ENCODE measurements at regions of chr13 and their contacts with region 1.

Region 1: DNA sequence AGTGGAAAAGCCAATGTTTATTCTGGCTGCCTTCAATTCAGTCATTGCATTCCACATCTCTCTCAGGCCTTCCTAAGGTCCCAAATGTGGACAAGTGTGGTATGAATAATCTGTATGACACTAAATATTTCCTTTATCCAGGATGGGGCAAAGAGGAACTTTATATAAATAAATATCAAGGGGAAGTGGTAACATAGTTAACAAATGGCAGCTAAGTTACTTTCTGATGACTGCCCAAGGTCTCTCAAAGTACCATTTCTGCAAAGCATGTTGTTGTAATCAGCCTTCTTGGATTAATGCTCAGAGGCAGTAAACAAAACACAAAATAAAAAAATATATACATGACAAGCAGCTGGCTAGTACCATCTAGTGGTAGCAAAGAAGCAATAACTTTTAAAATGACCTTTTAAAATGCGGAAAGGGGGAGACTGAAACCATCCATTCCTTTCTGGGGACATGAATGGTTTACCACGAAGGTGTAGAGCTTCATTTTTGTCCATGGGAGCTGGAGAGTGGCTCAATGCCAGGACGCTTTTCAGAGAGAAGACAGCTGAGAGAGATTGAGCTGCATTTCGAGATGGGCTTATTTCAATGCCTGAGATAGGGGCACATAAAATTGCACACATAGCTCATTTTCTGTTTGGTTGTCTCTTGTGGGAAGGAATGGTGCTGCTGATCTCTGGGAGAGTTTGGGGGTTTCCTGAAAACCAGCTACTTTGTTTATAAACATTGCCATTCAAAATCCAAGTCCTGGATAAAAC is 259.2 kb downstream of the RFC3 start:
- DNase-seq: no peak
- H3K4me3 ChIP-seq: no peak overlapping the region
- H3K4me3 Mint-ChIP-seq: no peak overlapping the region
- H3K27ac Mint-ChIP-seq: no peak overlapping the region
- H3K4me1 ChIP-seq: no peaks in the 10 kb centered on the region
- H3K4me1 Mint-ChIP-seq: peaks cover 6% of the 10 kb centered on the region
- H3K27me3 ChIP-seq: no peaks in the 10 kb centered on the region
- H3K27me3 Mint-ChIP-seq: no peaks in the 10 kb centered on the region
- CTCF ChIP-seq: peak; percentile 58 to 75

Region 2: GRCh38 chr13:32824671-32825070 is 1252.5 kb before region 1 on chr13:
- CTCF ChIA-PET with region 1: no interaction called
- POLR2A ChIA-PET with region 1: no interaction called
- intact Hi-C with region 1: no loop called
- DNase-seq: peak; percentile 80 to 89
- H3K4me3 ChIP-seq: no peak overlapping the region
- H3K4me3 Mint-ChIP-seq: peak overlapping the region; percentile 64
- H3K27ac Mint-ChIP-seq: peak overlapping the region; percentile 85
- H3K4me1 ChIP-seq: peaks cover 34% of the 10 kb centered on the region
- H3K4me1 Mint-ChIP-seq: peaks cover 26% of the 10 kb centered on the region
- H3K27me3 ChIP-seq: no peaks in the 10 kb centered on the region
- H3K27me3 Mint-ChIP-seq: no peaks in the 10 kb centered on the region
- CTCF ChIP-seq: no peak

Region 3: DNA sequence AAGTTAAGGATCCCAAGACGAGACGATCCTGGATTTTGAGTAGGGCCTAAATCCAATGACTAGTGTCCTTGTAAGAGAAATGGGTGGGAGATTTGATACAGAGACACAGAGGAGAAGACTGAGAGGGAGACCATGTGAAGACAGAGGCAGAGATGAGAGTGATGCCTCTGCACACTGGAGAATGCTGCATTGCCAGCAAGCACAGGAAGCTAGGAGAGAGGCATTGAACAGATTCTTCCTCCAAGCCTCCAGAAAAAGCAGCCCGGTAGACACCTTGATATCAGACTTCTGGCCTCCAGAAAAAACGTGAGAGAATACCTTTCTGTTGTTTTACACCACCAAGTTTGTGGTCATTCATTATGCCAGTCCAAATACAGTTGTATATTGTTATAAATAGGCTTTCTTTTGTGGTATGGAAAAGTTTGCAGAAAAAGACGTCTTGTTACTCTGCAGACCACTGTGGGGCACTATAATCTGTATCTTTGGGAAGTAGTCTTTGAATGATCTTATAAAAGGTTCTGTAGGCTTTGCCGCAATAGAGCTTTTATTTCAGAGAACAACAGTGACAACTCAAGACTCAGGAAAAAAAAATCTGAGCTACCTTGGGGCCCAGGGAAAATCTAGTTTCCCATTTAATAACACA is 277.1 kb before region 1 on chr13:
- CTCF ChIA-PET with region 1: interaction called, 3 read pairs
- POLR2A ChIA-PET with region 1: no interaction called
- intact Hi-C with region 1: loop called (anchors 1 kb)
- DNase-seq: no peak
- H3K4me3 ChIP-seq: no peak overlapping the region
- H3K4me3 Mint-ChIP-seq: no peak overlapping the region
- H3K27ac Mint-ChIP-seq: no peak overlapping the region
- H3K4me1 ChIP-seq: no peaks in the 10 kb centered on the region
- H3K4me1 Mint-ChIP-seq: no peaks in the 10 kb centered on the region
- H3K27me3 ChIP-seq: no peaks in the 10 kb centered on the region
- H3K27me3 Mint-ChIP-seq: peaks cover 15% of the 10 kb centered on the region
- CTCF ChIP-seq: peak in 1 of 2 experiments; percentile 42

Region 4: GRCh38 chr13:33817901-33818706 is 259.0 kb before region 1 on chr13 and contains the start of gene RFC3:
- CTCF ChIA-PET with region 1: no interaction called
- POLR2A ChIA-PET with region 1: no interaction called
- intact Hi-C with region 1: loop called (anchors 5 kb)
- DNase-seq: peak; percentile 94 to 96
- H3K4me3 ChIP-seq: peak within 1 kb of the TSS; percentile 83
- H3K4me3 Mint-ChIP-seq: peak within 1 kb of the TSS; percentile 82
- H3K27ac Mint-ChIP-seq: peak within 1 kb of the TSS; percentile 91
- H3K4me1 ChIP-seq: peaks cover 4% of the 10 kb centered on the region; the same call in 1 of the 2 replicates
- H3K4me1 Mint-ChIP-seq: no peaks in the 10 kb centered on the region
- H3K27me3 ChIP-seq: no peaks in the 10 kb centered on the region
- H3K27me3 Mint-ChIP-seq: no peaks in the 10 kb centered on the region
- CTCF ChIP-seq: peak in 1 of 2 experiments; percentile 2
- total RNA-seq, gene RFC3: 46.4 and 50.2 TPM in 2 replicates

Region 5: DNA sequence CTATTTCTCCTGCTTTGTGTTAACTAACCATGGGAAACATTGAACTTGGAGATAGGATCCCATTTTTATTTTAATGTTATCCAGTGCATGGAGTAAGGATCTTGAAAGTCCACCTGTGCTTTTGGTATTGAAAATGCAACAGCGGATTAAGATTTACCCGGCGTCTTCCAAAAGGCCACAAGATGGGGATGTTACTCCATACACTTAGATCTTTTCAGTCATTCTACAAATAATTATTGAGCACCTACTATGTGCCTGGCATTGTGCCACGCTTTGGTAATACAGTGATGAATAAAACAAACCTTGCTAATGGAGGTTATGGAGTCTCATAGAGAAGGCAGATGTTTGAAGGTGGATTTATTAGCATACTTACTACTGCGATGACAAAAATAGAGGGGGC is 202.2 kb before region 1 on chr13:
- CTCF ChIA-PET with region 1: no interaction called
- POLR2A ChIA-PET with region 1: no interaction called
- intact Hi-C with region 1: loop called (anchors 5 kb)
- DNase-seq: no peak
- H3K4me3 ChIP-seq: no peak overlapping the region
- H3K4me3 Mint-ChIP-seq: no peak overlapping the region
- H3K27ac Mint-ChIP-seq: no peak overlapping the region
- H3K4me1 ChIP-seq: peaks cover 19% of the 10 kb centered on the region
- H3K4me1 Mint-ChIP-seq: peaks cover 13% of the 10 kb centered on the region
- H3K27me3 ChIP-seq: no peaks in the 10 kb centered on the region
- H3K27me3 Mint-ChIP-seq: no peaks in the 10 kb centered on the region
- CTCF ChIP-seq: no peak

Region 6: GRCh38 chr13:33931397-33932311 is 145.5 kb before region 1 on chr13:
- CTCF ChIA-PET with region 1: interaction called, 7 read pairs
- POLR2A ChIA-PET with region 1: no interaction called
- intact Hi-C with region 1: loop called (anchors 1 kb)
- DNase-seq: peak; percentile 41 to 78
- H3K4me3 ChIP-seq: no peak overlapping the region
- H3K4me3 Mint-ChIP-seq: no peak overlapping the region
- H3K27ac Mint-ChIP-seq: no peak overlapping the region
- H3K4me1 ChIP-seq: no peaks in the 10 kb centered on the region
- H3K4me1 Mint-ChIP-seq: no peaks in the 10 kb centered on the region
- H3K27me3 ChIP-seq: no peaks in the 10 kb centered on the region
- H3K27me3 Mint-ChIP-seq: no peaks in the 10 kb centered on the region
- CTCF ChIP-seq: peak; percentile 56 to 71

Region 7: DNA sequence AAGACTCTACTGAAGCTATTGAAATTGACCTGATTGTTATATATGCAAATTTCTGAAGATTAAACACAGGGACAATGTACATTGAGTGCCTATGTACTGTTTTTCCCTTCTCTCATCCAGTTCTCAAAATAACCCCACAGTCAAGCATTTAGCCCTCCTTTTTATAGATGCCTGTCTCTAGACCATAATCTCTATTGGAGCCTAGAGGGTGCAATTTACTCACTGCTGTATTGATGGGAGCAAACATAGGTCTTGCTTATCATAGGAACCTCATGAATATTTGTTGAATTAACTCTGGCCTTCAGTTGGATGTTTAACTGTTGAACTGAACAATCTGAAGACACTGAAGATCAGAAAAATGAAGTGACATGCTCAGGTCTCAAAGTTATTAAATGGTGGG is 76.2 kb before region 1 on chr13:
- CTCF ChIA-PET with region 1: no interaction called
- POLR2A ChIA-PET with region 1: no interaction called
- intact Hi-C with region 1: loop called (anchors 1 kb)
- DNase-seq: no peak
- H3K4me3 ChIP-seq: no peak overlapping the region
- H3K4me3 Mint-ChIP-seq: no peak overlapping the region
- H3K27ac Mint-ChIP-seq: no peak overlapping the region
- H3K4me1 ChIP-seq: peaks cover 13% of the 10 kb centered on the region; the same call in 1 of the 2 replicates
- H3K4me1 Mint-ChIP-seq: peaks cover 15% of the 10 kb centered on the region
- H3K27me3 ChIP-seq: no peaks in the 10 kb centered on the region
- H3K27me3 Mint-ChIP-seq: no peaks in the 10 kb centered on the region
- CTCF ChIP-seq: peak in 1 of 2 experiments; percentile 32

Region 8: DNA sequence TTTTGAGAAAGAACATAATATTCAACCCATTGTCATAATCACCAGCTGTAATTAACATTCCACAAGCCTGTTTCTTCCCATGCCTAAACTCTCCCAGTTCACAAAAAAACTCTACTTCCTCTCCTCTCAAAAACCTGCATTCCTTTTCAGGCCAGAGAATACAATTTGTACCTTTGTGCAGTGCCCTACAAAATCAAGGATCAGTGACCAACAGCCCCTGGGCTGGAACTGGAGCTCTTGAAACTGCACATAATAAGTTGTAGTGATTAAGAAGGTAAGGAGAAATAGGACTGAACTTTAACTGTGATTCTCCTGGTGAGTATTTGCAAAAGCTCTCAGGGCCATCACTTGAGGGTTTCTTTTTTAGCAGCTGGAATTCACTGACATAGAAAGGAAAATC is 213.5 kb after region 1 on chr13:
- CTCF ChIA-PET with region 1: no interaction called
- POLR2A ChIA-PET with region 1: no interaction called
- intact Hi-C with region 1: no loop called
- DNase-seq: no peak
- H3K4me3 ChIP-seq: no peak overlapping the region
- H3K4me3 Mint-ChIP-seq: no peak overlapping the region
- H3K27ac Mint-ChIP-seq: no peak overlapping the region
- H3K4me1 ChIP-seq: no peaks in the 10 kb centered on the region
- H3K4me1 Mint-ChIP-seq: no peaks in the 10 kb centered on the region
- H3K27me3 ChIP-seq: no peaks in the 10 kb centered on the region
- H3K27me3 Mint-ChIP-seq: no peaks in the 10 kb centered on the region
- CTCF ChIP-seq: no peak

Region 9: DNA sequence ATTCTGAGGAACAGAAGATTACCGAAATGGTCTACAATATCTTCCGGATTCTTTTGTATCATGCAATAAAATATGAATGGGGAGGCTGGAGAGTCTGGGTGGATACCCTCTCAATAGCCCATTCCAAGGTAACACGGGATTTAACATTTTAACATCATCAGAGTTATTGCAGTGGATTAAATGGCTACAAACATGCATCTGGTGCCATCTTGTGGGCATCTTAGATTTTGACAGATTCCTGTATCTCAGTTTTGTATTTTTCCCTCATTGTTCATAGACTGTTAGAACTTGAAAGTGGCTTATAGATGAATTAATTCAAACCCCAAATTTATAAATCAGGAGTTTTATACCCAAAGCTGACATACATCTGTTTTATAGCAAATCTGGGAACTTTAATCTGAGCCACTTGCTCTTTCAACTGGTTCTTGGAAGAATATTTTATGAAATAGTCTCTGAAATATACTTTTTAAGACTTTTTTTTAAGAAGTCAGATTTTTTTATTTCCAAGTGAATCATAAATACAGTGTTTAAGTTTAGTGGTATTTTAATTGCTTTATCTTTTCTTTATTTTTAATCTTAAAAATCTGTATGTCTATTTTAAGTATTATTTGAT is 1080.1 kb after region 1 on chr13:
- CTCF ChIA-PET with region 1: no interaction called
- POLR2A ChIA-PET with region 1: no interaction called
- intact Hi-C with region 1: loop called (anchors 1 kb)
- DNase-seq: peak; percentile 40 to 52
- H3K4me3 ChIP-seq: no peak overlapping the region
- H3K4me3 Mint-ChIP-seq: no peak overlapping the region
- H3K27ac Mint-ChIP-seq: no peak overlapping the region
- H3K4me1 ChIP-seq: no peaks in the 10 kb centered on the region
- H3K4me1 Mint-ChIP-seq: peaks cover 8% of the 10 kb centered on the region
- H3K27me3 ChIP-seq: no peaks in the 10 kb centered on the region
- H3K27me3 Mint-ChIP-seq: no peaks in the 10 kb centered on the region
- CTCF ChIP-seq: peak; percentile 64 to 72